ENCODE measurements at regions of chr7 and their contacts with region 1.

Region 1: GRCh38 chr7:36487756-36488336 is 98.2 kb downstream of the ANLN start:
- DNase-seq: no peak
- ATAC-seq: no peak
- H3K4me3 ChIP-seq: no peak overlapping the region
- H3K27ac ChIP-seq: no peak overlapping the region
- H3K4me1 ChIP-seq: no peaks in the 10 kb centered on the region
- H3K27me3 ChIP-seq: peaks cover 0 to under 1% (median 0%) of the 10 kb centered on the region in 9 donors
- CTCF ChIP-seq: peak; percentile 37 to 72 (median 58)
- POLR2A ChIP-seq: no peak

Region 2: DNA sequence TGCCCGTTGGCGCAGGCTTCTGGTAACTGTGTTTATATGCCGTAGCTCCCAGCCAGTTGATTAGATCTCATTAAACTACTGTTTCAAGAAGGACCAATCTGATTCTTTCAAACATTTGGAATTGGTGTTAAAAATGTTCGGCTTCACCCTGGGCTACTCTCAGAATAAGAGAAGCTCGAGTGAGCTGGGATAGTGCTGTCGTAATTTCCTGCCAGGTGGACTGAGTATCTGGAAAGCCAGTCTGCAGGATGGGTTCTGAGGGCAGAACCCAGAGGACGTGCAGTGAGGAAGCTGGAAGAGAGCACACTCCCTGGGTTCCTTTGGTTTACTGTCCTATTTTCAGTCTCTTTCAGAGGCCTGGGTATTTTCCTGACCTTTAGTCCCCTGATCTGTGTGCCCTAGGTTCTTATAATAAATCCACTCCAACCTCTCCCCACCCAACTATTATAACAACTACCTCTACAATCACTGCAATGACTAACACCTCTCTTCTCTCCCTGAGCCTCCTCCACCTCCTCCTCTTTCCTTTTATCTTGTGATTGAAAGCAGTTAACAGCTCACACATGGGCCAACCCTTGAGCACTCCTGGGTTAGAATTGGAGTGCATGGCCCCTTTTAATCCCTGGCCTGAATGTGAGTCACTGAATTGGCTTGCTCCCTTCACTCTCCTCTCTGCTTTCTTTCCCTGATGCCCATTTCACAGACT is 173.4 kb after region 1 on chr7:
- intact Hi-C with region 1: loop called in 1 of 10 experiments (anchors 10 kb)
- DNase-seq: no peak
- ATAC-seq: no peak
- H3K4me3 ChIP-seq: no peak overlapping the region
- H3K27ac ChIP-seq: no peak overlapping the region
- H3K4me1 ChIP-seq: peaks cover 0 to 13% (median 0%) of the 10 kb centered on the region in 12 donors
- H3K27me3 ChIP-seq: no peaks in the 10 kb centered on the region
- CTCF ChIP-seq: no peak
- POLR2A ChIP-seq: no peak

Region 3: DNA sequence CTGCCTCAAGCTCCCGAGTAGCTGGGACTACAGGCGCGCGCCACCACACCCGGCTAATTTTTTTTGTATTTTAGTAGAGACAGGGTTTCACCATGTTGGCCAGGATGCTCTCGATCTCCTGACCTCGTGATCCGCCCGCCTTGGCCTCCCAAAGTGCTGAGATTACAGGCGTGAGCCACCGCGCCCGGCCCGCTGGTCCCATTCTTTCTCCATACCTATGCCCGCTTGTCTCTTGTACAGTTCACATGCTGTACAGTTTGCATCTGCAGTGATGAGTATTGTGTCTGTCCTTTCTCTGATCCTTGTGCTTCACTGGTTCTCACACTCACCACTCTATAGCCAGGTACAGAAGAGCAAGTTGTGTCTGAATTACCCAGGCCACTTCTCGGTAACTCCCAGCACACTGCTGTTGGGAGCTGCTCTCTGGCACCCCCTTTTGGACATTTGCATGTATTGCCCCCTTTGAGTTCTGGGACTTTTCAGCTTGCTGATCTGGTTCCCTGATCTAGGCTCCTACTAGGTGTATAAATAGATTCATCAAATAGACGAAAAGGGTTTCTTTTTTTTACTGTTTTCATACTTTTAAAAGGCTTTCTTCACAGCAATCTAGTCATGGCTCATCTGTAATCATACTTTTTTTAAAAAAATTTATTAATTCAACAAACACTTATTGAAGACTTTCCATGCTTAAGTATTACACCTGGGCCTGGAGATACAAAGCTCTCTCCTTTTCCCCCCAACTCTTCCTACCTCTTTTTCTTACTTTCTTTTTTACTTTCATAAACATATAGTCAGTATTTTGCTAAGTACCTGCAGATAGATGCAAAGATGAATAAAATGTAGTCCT is 183.0 kb after region 1 on chr7:
- intact Hi-C with region 1: loop called in 6 of 10 experiments (anchors 1 to 10 kb)
- DNase-seq: peak in 3 of 5 donors; percentile 19 to 41 (median 35)
- ATAC-seq: peak in 3 of 4 donors; percentile 46 to 77 (median 48)
- H3K4me3 ChIP-seq: no peak overlapping the region
- H3K27ac ChIP-seq: no peak overlapping the region
- H3K4me1 ChIP-seq: no peaks in the 10 kb centered on the region
- H3K27me3 ChIP-seq: no peaks in the 10 kb centered on the region
- CTCF ChIP-seq: peak; percentile 63 to 89 (median 78)
- POLR2A ChIP-seq: no peak

Region 4: GRCh38 chr7:36949711-36950600 is 462.1 kb after region 1 on chr7:
- intact Hi-C with region 1: loop called in 1 of 10 experiments (anchors 10 kb)
- DNase-seq: peak in 1 of 5 donors; percentile 29
- ATAC-seq: peak in 1 of 4 donors; percentile 19
- H3K4me3 ChIP-seq: no peak overlapping the region
- H3K27ac ChIP-seq: no peak overlapping the region
- H3K4me1 ChIP-seq: peaks cover 0 to 29% (median 8%) of the 10 kb centered on the region in 12 donors
- H3K27me3 ChIP-seq: no peaks in the 10 kb centered on the region
- CTCF ChIP-seq: no peak
- POLR2A ChIP-seq: no peak

Region 5: GRCh38 chr7:36967387-36967786 is 479.5 kb after region 1 on chr7:
- intact Hi-C with region 1: loop called in 1 of 10 experiments (anchors 5 kb)
- DNase-seq: peak; percentile 59 to 67 (median 63)
- ATAC-seq: peak; percentile 85 to 94 (median 92)
- H3K4me3 ChIP-seq: no peak overlapping the region
- H3K27ac ChIP-seq: no peak overlapping the region
- H3K4me1 ChIP-seq: peaks cover 0 to 49% (median 7%) of the 10 kb centered on the region in 12 donors
- H3K27me3 ChIP-seq: no peaks in the 10 kb centered on the region
- CTCF ChIP-seq: peak; percentile 70 to 89 (median 84)
- POLR2A ChIP-seq: no peak

Region 6: GRCh38 chr7:37181550-37181932 is 693.7 kb after region 1 on chr7:
- intact Hi-C with region 1: loop called (anchors 5 kb)
- DNase-seq: no peak
- ATAC-seq: no peak
- H3K4me3 ChIP-seq: no peak overlapping the region
- H3K27ac ChIP-seq: no peak overlapping the region
- H3K4me1 ChIP-seq: peaks cover 0 to 8% (median 0%) of the 10 kb centered on the region in 12 donors
- H3K27me3 ChIP-seq: no peaks in the 10 kb centered on the region
- CTCF ChIP-seq: no peak
- POLR2A ChIP-seq: no peak